ENCODE measurements at regions of chr1 and their contacts with region 1.

Region 1: GRCh38 chr1:84143796-84144565 is at the start of gene PRKACB:
- DNase-seq: no peak
- ATAC-seq: peak; percentile 91
- H3K4me3 Mint-ChIP-seq: peak within 1 kb of the TSS; percentile 98
- H3K27ac Mint-ChIP-seq: peak within 1 kb of the TSS; percentile 99
- H3K4me1 Mint-ChIP-seq: peaks cover 17% of the 10 kb centered on the region
- H3K27me3 Mint-ChIP-seq: no peaks in the 10 kb centered on the region
- total RNA-seq, gene PRKACB: 93.6 to 111 TPM

Region 2: GRCh38 chr1:84122780-84123382 is 21.1 kb before region 1 on chr1:
- POLR2A ChIA-PET with region 1: no interaction called
- DNase-seq: peak; percentile 37
- ATAC-seq: no peak
- H3K4me3 Mint-ChIP-seq: no peak overlapping the region
- H3K27ac Mint-ChIP-seq: no peak overlapping the region
- H3K4me1 Mint-ChIP-seq: no peaks in the 10 kb centered on the region
- H3K27me3 Mint-ChIP-seq: no peaks in the 10 kb centered on the region

Region 3: DNA sequence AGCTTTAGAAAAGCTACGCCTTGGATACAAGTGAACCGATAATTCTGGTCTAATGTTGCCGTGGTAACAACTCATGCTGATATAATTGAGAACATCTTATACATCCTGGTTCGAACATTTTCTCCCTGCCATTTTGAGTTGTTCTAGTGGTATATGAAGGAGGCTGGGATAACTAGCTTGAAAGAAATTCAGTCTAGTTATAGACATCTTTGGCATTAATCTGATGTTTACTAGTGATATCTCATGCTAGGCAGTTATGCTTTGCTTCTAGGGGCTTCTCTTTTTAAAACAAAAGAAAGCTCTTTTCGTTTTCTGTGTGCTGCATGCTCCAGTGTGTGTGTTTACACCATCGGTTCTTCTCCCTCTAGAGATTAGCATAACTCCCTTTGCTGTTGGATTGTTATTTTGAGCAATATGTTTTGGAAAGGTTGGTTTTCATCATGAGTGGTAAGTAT is 20.6 kb after region 1 on chr1:
- POLR2A ChIA-PET with region 1: interaction called, 10 read pairs
- DNase-seq: no peak
- ATAC-seq: peak; percentile 39
- H3K4me3 Mint-ChIP-seq: peak overlapping the region; percentile 57
- H3K27ac Mint-ChIP-seq: peak overlapping the region; percentile 21
- H3K4me1 Mint-ChIP-seq: peaks cover 49% of the 10 kb centered on the region
- H3K27me3 Mint-ChIP-seq: no peaks in the 10 kb centered on the region

Region 4: DNA sequence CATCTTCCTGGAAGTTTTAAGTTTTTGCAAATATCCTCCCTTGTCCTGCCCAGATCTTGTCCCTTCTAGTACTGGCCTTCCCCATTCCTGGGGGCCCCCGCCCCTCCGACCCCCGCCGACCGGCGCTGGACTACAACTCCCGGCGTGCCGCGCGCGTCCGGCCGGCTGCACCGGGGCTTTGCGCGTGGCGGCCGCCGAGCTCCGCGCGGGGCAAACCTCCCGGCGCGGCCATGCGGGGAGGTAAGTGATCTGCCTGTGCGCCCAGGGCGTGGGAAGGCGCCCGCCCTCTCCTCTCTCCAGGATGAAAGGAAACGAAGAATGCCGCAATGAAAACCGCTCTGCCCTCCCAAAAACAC is 154.3 kb after region 1 on chr1:
- POLR2A ChIA-PET with region 1: interaction called, 21 read pairs
- DNase-seq: peak; percentile 76
- ATAC-seq: peak; percentile 84
- H3K4me3 Mint-ChIP-seq: peak overlapping the region; percentile 92
- H3K27ac Mint-ChIP-seq: peak overlapping the region; percentile 85
- H3K4me1 Mint-ChIP-seq: peaks cover 35% of the 10 kb centered on the region
- H3K27me3 Mint-ChIP-seq: peaks cover 5% of the 10 kb centered on the region

Region 5: GRCh38 chr1:84433258-84434080 is 289.5 kb after region 1 on chr1:
- POLR2A ChIA-PET with region 1: interaction called, 44 read pairs
- DNase-seq: peak; percentile 28
- ATAC-seq: peak; percentile 67
- H3K4me3 Mint-ChIP-seq: peak overlapping the region; percentile 67
- H3K27ac Mint-ChIP-seq: peak overlapping the region; percentile 44
- H3K4me1 Mint-ChIP-seq: peaks cover 15% of the 10 kb centered on the region
- H3K27me3 Mint-ChIP-seq: no peaks in the 10 kb centered on the region

Region 6: GRCh38 chr1:84506002-84506728 is 362.2 kb after region 1 on chr1 and contains the starts of genes GNG5 and SPATA1:
- POLR2A ChIA-PET with region 1: interaction called, 31 read pairs
- DNase-seq: peak; percentile 99
- ATAC-seq: peak; percentile 91
- H3K4me3 Mint-ChIP-seq: peak within 1 kb of the TSS; percentile 99
- H3K27ac Mint-ChIP-seq: peak within 1 kb of the TSS; percentile 100
- H3K4me1 Mint-ChIP-seq: peaks cover 22% of the 10 kb centered on the region
- H3K27me3 Mint-ChIP-seq: no peaks in the 10 kb centered on the region
- total RNA-seq, gene GNG5: 88.0 to 88.4 TPM
- total RNA-seq, gene SPATA1: 3.3 to 4.0 TPM

Region 7: GRCh38 chr1:84573967-84574842 is 430.2 kb after region 1 on chr1 and contains the start of gene CTBS:
- POLR2A ChIA-PET with region 1: interaction called, 21 read pairs
- DNase-seq: peak; percentile 88
- ATAC-seq: peak; percentile 89
- H3K4me3 Mint-ChIP-seq: peak within 1 kb of the TSS; percentile 97
- H3K27ac Mint-ChIP-seq: peak within 1 kb of the TSS; percentile 100
- H3K4me1 Mint-ChIP-seq: peaks cover 29% of the 10 kb centered on the region
- H3K27me3 Mint-ChIP-seq: no peaks in the 10 kb centered on the region
- total RNA-seq, gene CTBS: 17.0 to 17.3 TPM

Measured in activated naive CD8-positive, alpha-beta T cell treated with anti-CD3 and anti-CD28 coated beads, Interleukin-2, amount 10 ng/mL, durations not matched to agents 7 days and 5 days (primary cell).